ENCODE measurements at regions of chr11 and their contacts with region 1.

Region 1: GRCh38 chr11:128956401-128957201 is 13.9 kb upstream of the TP53AIP1 start:
- DNase-seq: peak; percentile 50 to 69
- H3K4me3 ChIP-seq: no peak overlapping the region
- H3K27ac ChIP-seq: no peak overlapping the region
- H3K4me1 ChIP-seq: no peaks in the 10 kb centered on the region
- H3K27me3 ChIP-seq: no peaks in the 10 kb centered on the region
- CTCF ChIP-seq: peak; percentile 82

Region 2: GRCh38 chr11:128039140-128040021 is 917.2 kb before region 1 on chr11:
- CTCF ChIA-PET with region 1: no interaction called
- POLR2A ChIA-PET with region 1: no interaction called
- intact Hi-C with region 1: loop called (anchors 5 kb)
- DNase-seq: peak in 1 of 2 experiments; percentile 45
- H3K4me3 ChIP-seq: no peak overlapping the region
- H3K27ac ChIP-seq: no peak overlapping the region
- H3K4me1 ChIP-seq: no peaks in the 10 kb centered on the region
- H3K27me3 ChIP-seq: no peaks in the 10 kb centered on the region
- CTCF ChIP-seq: no peak

Measured in PC-9 (cell line).